ENCODE measurements at regions of chr1 and their contacts with region 1.

Region 1: GRCh38 chr1:52296345-52296744 is 69.7 kb downstream of the CC2D1B start:
- DNase-seq: no peak
- H3K4me3 ChIP-seq: no peak overlapping the region
- H3K27ac ChIP-seq: no peak overlapping the region
- H3K4me1 ChIP-seq: peaks cover 0 to 8% (median 0%) of the 10 kb centered on the region in 4 donors
- H3K27me3 ChIP-seq: no peaks in the 10 kb centered on the region
- CTCF ChIP-seq: peak; percentile 69 to 77 (median 73)
- EP300 ChIP-seq: no peak
- POLR2A ChIP-seq: no peak

Region 2: GRCh38 chr1:52127181-52128180 is 168.9 kb before region 1 on chr1:
- intact Hi-C with region 1: loop called (anchors 2 kb)
- DNase-seq: no peak
- H3K4me3 ChIP-seq: no peak overlapping the region
- H3K27ac ChIP-seq: no peak overlapping the region
- H3K4me1 ChIP-seq: no peaks in the 10 kb centered on the region
- H3K27me3 ChIP-seq: no peaks in the 10 kb centered on the region
- CTCF ChIP-seq: peak; percentile 66 to 81 (median 68)
- EP300 ChIP-seq: no peak
- POLR2A ChIP-seq: no peak

Region 3: GRCh38 chr1:52141513-52142219 is 154.7 kb before region 1 on chr1 and contains the start of gene ZFYVE9:
- intact Hi-C with region 1: loop called (anchors 1 kb)
- DNase-seq: no peak
- H3K4me3 ChIP-seq: peak within 1 kb of the TSS; percentile 80 to 96 (median 96)
- H3K27ac ChIP-seq: peak within 1 kb of the TSS; percentile 98 to 99 (median 99)
- H3K4me1 ChIP-seq: peaks cover 23 to 57% (median 52%) of the 10 kb centered on the region in 4 donors
- H3K27me3 ChIP-seq: no peaks in the 10 kb centered on the region
- CTCF ChIP-seq: peak; percentile 73 to 86 (median 83)
- EP300 ChIP-seq: no peak
- POLR2A ChIP-seq: no peak
- total RNA-seq, gene ZFYVE9: 38.1 to 54.8 (median 40.9) TPM